AG04450 (cell line): ENCODE measurements at regions of chr12 and their contacts with region 1.

Region 1: DNA sequence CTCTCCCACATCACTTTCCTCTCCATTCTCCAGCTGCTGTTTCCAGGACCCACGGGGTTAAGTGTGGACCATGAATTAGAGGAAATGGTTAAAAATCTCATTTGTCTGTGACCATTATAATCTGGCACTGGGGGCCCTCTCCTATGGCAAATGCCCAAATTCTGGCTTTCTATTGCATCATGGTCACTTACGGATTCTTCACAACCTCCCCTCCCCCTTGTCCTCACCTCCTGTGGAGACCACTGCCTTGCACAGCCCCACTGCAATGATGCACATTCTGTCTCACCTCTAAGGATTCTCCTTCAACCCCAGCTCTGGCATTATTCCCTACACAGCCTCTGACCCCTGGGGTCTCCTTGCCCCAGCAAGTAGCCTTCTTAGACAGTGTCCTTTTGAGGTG is 18.9 kb downstream of the BCAT1 start:
- DNase-seq: no peak
- H3K4me3 ChIP-seq: no peak overlapping the region
- H3K27ac ChIP-seq: peak overlapping the region; percentile 47
- H3K27me3 ChIP-seq: no peaks in the 10 kb centered on the region
- CTCF ChIP-seq: no peak

Region 2: GRCh38 chr12:24879644-24880043 is 50.3 kb before region 1 on chr12:
- CTCF ChIA-PET with region 1: no interaction called
- POLR2A ChIA-PET with region 1: interaction called, 11 read pairs
- DNase-seq: no peak
- H3K4me3 ChIP-seq: no peak overlapping the region
- H3K27ac ChIP-seq: no peak overlapping the region
- H3K27me3 ChIP-seq: no peaks in the 10 kb centered on the region
- CTCF ChIP-seq: no peak

Region 3: GRCh38 chr12:25151476-25151875 is 221.5 kb after region 1 on chr12:
- CTCF ChIA-PET with region 1: no interaction called
- POLR2A ChIA-PET with region 1: no interaction called
- DNase-seq: peak; percentile 98
- H3K4me3 ChIP-seq: no peak overlapping the region
- H3K27ac ChIP-seq: peak overlapping the region; percentile 77
- H3K27me3 ChIP-seq: no peaks in the 10 kb centered on the region
- CTCF ChIP-seq: no peak